ENCODE measurements at regions of chr11 and their contacts with region 1.

Region 1: DNA sequence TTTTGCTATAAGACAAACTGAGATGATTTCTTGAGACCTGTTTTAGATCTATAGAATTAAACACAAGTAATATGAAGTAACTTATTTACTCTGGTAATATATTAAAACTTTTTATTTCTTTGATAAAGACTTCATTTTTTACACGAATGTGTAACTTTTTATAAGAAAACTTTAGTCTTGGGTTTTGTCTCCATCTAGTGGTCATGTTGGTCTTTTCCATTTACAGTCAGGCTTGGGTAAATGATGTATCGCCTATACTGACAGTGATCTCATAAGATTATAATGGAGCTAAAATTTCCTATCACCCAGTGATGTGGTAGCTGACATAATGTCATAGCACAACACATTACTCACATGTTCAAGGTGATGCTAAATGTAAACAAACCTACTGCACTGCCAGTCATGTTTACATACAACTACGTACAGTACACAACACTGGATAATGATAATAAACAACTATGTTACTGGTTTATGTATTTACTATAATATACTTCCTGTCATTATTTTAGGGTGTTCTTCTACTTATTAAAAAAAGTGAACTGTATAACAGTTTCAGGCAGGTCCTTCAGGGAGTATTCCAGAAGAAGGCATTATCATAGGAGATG is 7.5 kb upstream of the C11orf97 start:
- DNase-seq: no peak
- H3K4me3 ChIP-seq: no peak overlapping the region
- H3K27ac ChIP-seq: no peak overlapping the region
- H3K27me3 ChIP-seq: no peaks in the 10 kb centered on the region
- CTCF ChIP-seq: peak; percentile 52 to 85 (median 77)

Region 2: DNA sequence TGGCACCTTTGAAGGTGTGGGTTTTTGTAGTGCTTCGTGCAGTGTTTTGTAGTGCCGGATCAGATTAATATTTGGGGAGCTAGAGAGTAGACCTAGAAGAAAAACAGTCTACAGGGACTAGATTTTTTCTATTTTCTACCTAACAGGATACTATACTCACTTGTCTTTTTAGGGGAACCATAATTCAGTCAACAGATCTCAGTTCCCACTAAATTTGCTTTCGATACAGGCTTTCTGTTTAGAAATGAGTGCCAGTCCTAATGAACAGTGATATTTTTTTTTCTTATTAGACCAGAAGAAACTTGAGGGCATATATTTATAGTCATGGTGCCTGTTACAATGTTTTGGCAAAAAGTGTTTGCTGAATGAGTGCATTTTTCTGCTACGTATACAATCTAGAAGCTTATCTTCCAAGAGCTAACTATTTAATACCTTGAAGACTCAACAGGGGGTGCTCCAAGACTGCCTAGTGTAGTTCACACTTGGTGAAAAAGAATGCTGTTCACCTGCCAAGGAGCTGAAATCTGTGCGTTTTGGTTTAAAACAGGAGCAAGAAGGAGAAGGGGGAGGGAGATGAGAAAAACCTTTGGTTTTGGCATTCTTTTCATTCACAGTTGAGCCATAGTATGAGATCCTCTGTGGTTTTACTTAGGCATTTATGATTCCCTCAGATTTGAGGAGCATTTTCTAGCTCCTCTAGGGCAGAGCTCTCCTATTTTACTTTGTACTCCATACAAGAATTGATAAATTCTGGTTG is 609.5 kb before region 1 on chr11:
- intact Hi-C with region 1: loop called in 1 of 2 experiments (anchors 5 kb)
- DNase-seq: peak in 3 of 10 donors; percentile 15 to 43 (median 15)
- H3K4me3 ChIP-seq: peak overlapping the region in 2 of 59 donors; percentile 13 to 25
- H3K27ac ChIP-seq: no peak overlapping the region
- H3K27me3 ChIP-seq: peaks cover 0 to 5% (median 0%) of the 10 kb centered on the region in 45 donors
- CTCF ChIP-seq: peak; percentile 49 to 78 (median 66)

Region 3: DNA sequence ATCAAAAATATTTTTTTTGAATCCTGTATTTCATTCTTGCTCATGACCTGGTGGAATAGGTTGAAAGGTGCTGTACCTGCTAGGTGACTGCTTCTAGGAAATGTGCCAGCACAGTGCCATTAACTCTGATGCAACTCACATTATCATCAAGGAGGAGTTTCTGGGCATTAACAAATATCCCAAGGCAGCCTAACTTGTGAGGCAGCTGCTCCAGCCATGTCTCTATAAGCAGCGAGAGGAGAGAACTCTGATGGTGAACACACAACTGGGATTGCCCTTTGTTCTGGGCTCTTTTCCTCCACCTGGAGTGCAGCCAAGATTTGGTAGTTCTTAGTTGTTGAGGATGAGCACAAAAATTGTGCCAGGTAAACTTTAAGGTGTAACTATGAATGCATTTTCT is 458.0 kb before region 1 on chr11:
- intact Hi-C with region 1: no loop called
- DNase-seq: no peak
- H3K4me3 ChIP-seq: no peak overlapping the region
- H3K27ac ChIP-seq: no peak overlapping the region
- H3K27me3 ChIP-seq: no peaks in the 10 kb centered on the region
- CTCF ChIP-seq: no peak

Region 4: GRCh38 chr11:94183886-94184264 is 320.9 kb before region 1 on chr11:
- intact Hi-C with region 1: loop called in 1 of 2 experiments (anchors 10 kb)
- DNase-seq: peak in 5 of 10 donors; percentile 16 to 79 (median 37)
- H3K4me3 ChIP-seq: peak overlapping the region in 1 of 59 donors; percentile 5
- H3K27ac ChIP-seq: no peak overlapping the region
- H3K27me3 ChIP-seq: no peaks in the 10 kb centered on the region
- CTCF ChIP-seq: peak in 53 of 56 donors; percentile 36 to 73 (median 60)